GM12878 (cell line): ENCODE measurements at regions of chr1 and their contacts with region 1.

Region 1: GRCh38 chr1:113140588-113141446 is 67.8 kb downstream of the LRIG2 start:
- DNase-seq: peak; percentile 17
- ATAC-seq: peak; percentile 97
- H3K4me3 ChIP-seq: no peak overlapping the region
- H3K27ac ChIP-seq: no peak overlapping the region
- H3K4me1 ChIP-seq: peaks cover 3% of the 10 kb centered on the region
- H3K27me3 ChIP-seq: no peaks in the 10 kb centered on the region
- CTCF ChIP-seq: peak; percentile 77 to 96 (median 89)
- EP300 ChIP-seq: no peak
- POLR2A ChIP-seq: no peak
- RAD21 ChIP-seq: peak; percentile 97

Region 2: DNA sequence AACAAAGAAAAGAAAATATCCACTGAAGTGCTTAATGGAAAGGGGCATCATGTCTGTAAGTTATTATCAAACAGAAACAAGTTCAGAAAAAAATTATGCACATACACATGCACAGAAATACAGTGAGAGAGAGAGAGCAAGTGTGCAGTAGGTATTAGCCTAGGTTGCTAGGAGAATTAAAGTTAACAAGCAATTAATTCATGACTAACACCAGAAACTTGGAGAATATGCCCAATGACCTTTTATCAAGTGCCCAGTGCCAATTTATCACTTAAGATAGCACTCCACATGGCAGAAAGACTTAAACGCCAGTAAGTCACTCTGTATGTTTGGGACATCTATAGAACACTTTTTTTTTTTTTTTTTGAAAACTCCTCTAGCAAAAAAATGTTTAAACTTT is 128.7 kb before region 1 on chr1:
- CTCF ChIA-PET with region 1: no interaction called
- POLR2A ChIA-PET with region 1: no interaction called
- RAD21 ChIA-PET with region 1: no interaction called
- SMC1A ChIA-PET with region 1: no interaction called
- in situ Hi-C with region 1: no loop called
- intact Hi-C with region 1: no loop called
- DNase-seq: no peak
- ATAC-seq: no peak
- H3K4me3 ChIP-seq: no peak overlapping the region
- H3K27ac ChIP-seq: no peak overlapping the region
- H3K4me1 ChIP-seq: no peaks in the 10 kb centered on the region
- H3K27me3 ChIP-seq: no peaks in the 10 kb centered on the region
- CTCF ChIP-seq: no peak
- EP300 ChIP-seq: no peak
- POLR2A ChIP-seq: no peak
- RAD21 ChIP-seq: no peak

Region 3: DNA sequence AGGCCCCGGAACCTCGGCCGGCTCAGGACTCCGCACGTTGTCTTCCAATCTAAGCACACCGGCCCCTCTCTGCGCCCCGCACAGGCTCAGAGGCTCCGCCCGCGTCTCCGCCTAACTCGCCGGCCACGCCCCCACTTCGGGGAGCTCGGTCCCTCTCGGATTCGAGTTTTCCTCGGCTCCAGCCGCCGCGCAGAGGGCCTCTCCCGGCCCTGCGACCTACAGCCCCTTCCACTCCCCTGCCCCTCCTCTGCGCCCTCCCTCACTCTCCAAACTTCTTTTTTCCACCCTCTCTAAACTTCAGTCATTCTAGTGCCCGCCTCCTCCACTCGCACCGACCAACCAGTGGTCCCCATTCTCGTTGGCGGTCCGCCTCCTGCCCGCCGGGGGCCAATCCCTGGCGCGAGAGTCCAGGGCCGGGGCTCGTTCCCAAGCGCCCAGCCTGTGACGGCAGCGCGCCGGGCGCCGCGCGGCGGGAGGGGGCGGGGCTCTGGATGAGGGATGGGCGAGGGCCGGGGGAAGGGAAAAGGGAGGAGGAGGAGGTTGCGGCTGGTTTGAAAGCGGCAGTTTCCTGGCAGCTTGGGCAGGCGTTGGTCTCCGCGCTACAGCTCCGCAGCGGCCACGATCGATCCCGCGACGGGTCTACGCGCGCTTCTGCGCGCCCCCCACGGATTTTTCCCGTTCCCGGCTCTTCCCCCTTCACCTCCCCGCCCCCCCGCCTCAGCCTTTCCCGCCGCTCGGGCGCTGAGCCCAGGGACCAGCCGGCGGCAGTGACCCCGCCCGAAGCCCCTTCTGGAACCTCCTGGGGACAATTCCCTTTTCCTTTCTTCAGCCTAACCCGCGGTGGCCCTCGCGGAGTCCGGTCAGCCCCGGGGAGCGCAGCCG is 249.4 kb after region 1 on chr1 and contains the start of gene MAGI3:
- CTCF ChIA-PET with region 1: interaction called, 3 read pairs
- POLR2A ChIA-PET with region 1: no interaction called
- RAD21 ChIA-PET with region 1: interaction called, 3 read pairs
- SMC1A ChIA-PET with region 1: no interaction called
- in situ Hi-C with region 1: no loop called
- intact Hi-C with region 1: loop called (anchors 5 kb)
- DNase-seq: peak; percentile 68
- ATAC-seq: peak; percentile 99
- H3K4me3 ChIP-seq: peak within 1 kb of the TSS; percentile 68
- H3K27ac ChIP-seq: no peak within 1 kb of the TSS
- H3K4me1 ChIP-seq: peaks cover 2% of the 10 kb centered on the region; the same call in 1 of the 2 replicates
- H3K27me3 ChIP-seq: peaks cover 0 to 10% of the 10 kb centered on the region in 2 experiments; a peak in 2 of 4 replicates
- CTCF ChIP-seq: no peak
- EP300 ChIP-seq: no peak
- POLR2A ChIP-seq: peak; percentile 59
- RAD21 ChIP-seq: no peak
- polyA plus RNA-seq, gene MAGI3: 0.24 to 0.29 TPM

Region 4: GRCh38 chr1:113452921-113453770 is 312.3 kb after region 1 on chr1:
- CTCF ChIA-PET with region 1: interaction called, 25 read pairs
- POLR2A ChIA-PET with region 1: no interaction called
- RAD21 ChIA-PET with region 1: interaction called, 7 read pairs
- SMC1A ChIA-PET with region 1: interaction called, 15 read pairs
- in situ Hi-C with region 1: loop called (anchors 5 kb)
- intact Hi-C with region 1: loop called (anchors 1 kb)
- DNase-seq: no peak
- ATAC-seq: peak; percentile 67; the same call in 2 of the 3 replicates
- H3K4me3 ChIP-seq: no peak overlapping the region
- H3K27ac ChIP-seq: no peak overlapping the region
- H3K4me1 ChIP-seq: no peaks in the 10 kb centered on the region
- H3K27me3 ChIP-seq: no peaks in the 10 kb centered on the region; a peak in 1 of 4 replicates
- CTCF ChIP-seq: peak; percentile 37 to 46 (median 38); a peak in 4 of 6 replicates
- EP300 ChIP-seq: no peak
- POLR2A ChIP-seq: no peak
- RAD21 ChIP-seq: peak; percentile 59

Region 5: DNA sequence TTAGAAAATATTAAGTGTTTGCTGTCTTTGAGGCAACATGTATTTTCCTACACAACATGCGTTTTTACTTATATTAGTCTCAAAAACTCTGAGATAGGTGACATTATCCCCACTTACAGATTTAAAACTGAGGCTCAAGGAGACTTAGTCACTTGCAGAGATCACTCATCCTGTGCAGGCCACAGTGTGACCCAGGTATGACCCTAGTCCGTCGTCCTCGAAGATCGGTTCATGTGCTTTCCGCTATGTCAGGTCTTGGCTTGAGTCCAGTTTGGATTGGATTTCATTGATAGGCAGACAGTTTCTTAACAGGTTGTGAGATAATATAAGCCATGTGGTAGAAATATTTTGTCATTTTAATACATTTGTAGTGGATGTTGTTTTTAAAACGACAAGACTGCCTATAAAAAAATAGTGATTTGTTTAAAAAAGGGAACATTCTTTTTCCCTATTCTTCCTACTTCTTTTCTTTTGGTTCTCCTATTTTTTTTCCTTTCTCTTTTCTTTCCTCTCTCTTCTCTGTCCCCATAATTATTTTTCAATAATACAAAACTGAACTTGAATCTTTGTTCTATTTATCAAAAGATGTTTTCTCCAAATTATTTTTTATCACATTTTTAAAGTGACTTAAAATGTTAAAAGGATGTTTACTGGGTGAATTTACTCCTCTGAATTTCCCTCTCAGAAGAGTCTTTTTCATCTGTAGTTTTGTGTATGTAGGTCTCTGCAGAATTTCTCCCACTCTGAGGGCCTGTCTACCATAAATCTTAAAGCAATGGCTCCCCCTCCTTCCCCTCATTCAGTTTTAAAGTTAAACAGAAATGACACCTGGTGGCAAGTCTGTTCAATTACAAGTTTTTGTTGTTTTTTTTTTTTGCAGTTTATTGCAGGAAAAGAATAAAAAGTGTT is 536.7 kb after region 1 on chr1:
- CTCF ChIA-PET with region 1: interaction called, 43 read pairs
- POLR2A ChIA-PET with region 1: interaction called, 3 read pairs
- RAD21 ChIA-PET with region 1: interaction called, 4 read pairs
- SMC1A ChIA-PET with region 1: interaction called, 37 read pairs
- in situ Hi-C with region 1: loop called (anchors 5 kb)
- intact Hi-C with region 1: loop called (anchors 1 kb)
- DNase-seq: no peak
- ATAC-seq: peak; percentile 74; the same call in 2 of the 3 replicates
- H3K4me3 ChIP-seq: no peak overlapping the region
- H3K27ac ChIP-seq: no peak overlapping the region
- H3K4me1 ChIP-seq: no peaks in the 10 kb centered on the region
- H3K27me3 ChIP-seq: no peaks in the 10 kb centered on the region
- CTCF ChIP-seq: peak; percentile 36 to 52 (median 42); a peak in 5 of 6 replicates
- EP300 ChIP-seq: no peak
- POLR2A ChIP-seq: no peak
- RAD21 ChIP-seq: peak; percentile 81

Region 6: GRCh38 chr1:113684153-113684541 is 543.3 kb after region 1 on chr1:
- CTCF ChIA-PET with region 1: interaction called, 43 read pairs
- POLR2A ChIA-PET with region 1: interaction called, 3 read pairs
- RAD21 ChIA-PET with region 1: interaction called, 3 read pairs
- SMC1A ChIA-PET with region 1: interaction called, 37 read pairs
- in situ Hi-C with region 1: loop called (anchors 5 kb)
- intact Hi-C with region 1: no loop called
- DNase-seq: no peak
- ATAC-seq: no peak
- H3K4me3 ChIP-seq: no peak overlapping the region
- H3K27ac ChIP-seq: no peak overlapping the region
- H3K4me1 ChIP-seq: no peaks in the 10 kb centered on the region
- H3K27me3 ChIP-seq: no peaks in the 10 kb centered on the region
- CTCF ChIP-seq: no peak
- EP300 ChIP-seq: no peak
- POLR2A ChIP-seq: no peak
- RAD21 ChIP-seq: no peak